ENCODE measurements at regions of chr11 and their contacts with region 1.

Region 1: DNA sequence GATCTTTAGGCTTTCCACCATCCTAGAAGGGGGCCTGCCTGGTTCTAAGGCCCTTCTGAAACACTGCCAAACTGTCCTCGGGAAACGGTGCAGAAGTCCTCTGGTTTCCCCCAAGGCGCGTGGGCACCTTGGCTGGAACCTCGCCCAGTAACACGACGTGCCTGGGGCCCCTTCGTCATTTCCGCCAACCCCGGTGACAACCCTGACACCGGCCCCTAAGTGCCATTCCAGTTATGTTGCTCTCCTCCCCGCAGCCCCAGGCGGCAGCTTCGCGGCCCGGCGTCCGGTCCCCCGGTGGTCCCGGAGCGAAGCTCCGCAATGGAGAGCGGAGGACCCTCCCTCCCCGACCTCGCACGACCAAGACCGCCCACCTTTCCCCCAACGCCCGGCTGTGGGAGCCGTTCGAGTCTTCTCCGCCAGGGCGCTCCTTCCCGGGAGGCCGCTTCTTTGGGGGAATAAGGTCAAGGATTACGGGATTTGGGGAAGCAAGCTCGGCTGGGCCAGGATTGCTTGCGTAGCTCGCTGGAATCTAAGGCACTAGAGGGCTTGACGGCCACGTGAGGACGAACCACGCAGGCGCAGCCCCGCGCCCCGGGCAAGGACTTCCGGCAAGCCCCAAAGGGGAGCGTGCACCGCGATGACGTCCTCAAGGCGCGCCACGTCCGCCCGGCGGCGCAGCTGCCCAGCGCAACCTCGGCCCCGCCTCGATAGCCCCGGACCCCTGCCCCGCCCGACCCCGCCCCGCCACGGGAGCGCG is 626 bp downstream of the RNH1 start:
- DNase-seq: peak; percentile 98
- H3K4me3 Mint-ChIP-seq: peak overlapping the region; percentile 92
- H3K27ac Mint-ChIP-seq: peak overlapping the region; percentile 99
- H3K4me1 Mint-ChIP-seq: peaks cover 22% of the 10 kb centered on the region
- H3K27me3 Mint-ChIP-seq: no peaks in the 10 kb centered on the region

Region 2: DNA sequence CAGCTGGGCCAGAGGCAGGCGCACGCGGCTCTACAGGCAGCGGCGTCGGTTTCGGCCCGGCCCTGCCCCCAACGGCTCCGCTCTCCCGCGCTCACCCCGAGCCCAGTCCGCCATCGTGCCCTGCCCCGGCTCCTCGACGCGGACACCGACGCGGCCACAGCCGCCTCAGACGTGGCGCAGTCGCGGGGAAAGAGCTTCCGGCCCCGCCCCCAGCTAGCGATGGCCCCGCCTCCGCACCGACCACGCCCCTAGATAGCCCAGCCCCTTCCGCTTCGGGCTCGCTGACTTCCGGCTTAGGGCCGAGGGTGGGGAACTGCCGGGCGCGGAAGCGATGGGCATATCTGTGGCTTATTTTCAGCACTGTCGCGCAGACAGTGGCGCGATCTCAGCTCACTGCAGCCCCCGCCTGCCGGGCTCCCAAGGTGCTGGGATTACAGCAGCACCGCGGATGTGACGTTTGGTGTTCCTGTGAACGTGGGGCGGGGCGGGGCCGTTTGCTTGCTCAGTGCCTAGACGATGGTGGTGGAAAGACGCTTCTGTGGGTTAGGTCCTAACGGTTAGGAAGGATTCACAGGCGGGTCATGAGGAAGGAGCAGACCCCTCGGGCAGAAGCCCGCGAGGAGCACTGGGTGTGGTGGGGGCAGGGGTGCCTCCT is 299.1 kb before region 1 on chr11 and contains the starts of genes BET1L and RIC8A:
- CTCF ChIA-PET with region 1: no interaction called
- intact Hi-C with region 1: loop called (anchors 1 kb)
- DNase-seq: peak; percentile 98
- H3K4me3 Mint-ChIP-seq: peak within 1 kb of the TSS; percentile 96
- H3K27ac Mint-ChIP-seq: peak within 1 kb of the TSS; percentile 98
- H3K4me1 Mint-ChIP-seq: peaks cover 69% of the 10 kb centered on the region
- H3K27me3 Mint-ChIP-seq: no peaks in the 10 kb centered on the region
- total RNA-seq, gene BET1L: 50.4 to 51.6 TPM
- total RNA-seq, gene RIC8A: 74.9 to 85.0 TPM

Region 3: GRCh38 chr11:313787-314547 is 192.4 kb before region 1 on chr11 and contains the start of gene IFITM1:
- CTCF ChIA-PET with region 1: no interaction called
- intact Hi-C with region 1: loop called (anchors 2 kb)
- DNase-seq: peak; percentile 77
- H3K4me3 Mint-ChIP-seq: peak within 1 kb of the TSS; percentile 93
- H3K27ac Mint-ChIP-seq: peak within 1 kb of the TSS; percentile 95
- H3K4me1 Mint-ChIP-seq: peaks cover 22% of the 10 kb centered on the region
- H3K27me3 Mint-ChIP-seq: no peaks in the 10 kb centered on the region
- total RNA-seq, gene IFITM1: 359 to 378 TPM

Region 4: GRCh38 chr11:416757-417621 is 89.4 kb before region 1 on chr11:
- CTCF ChIA-PET with region 1: no interaction called
- intact Hi-C with region 1: loop called (anchors 2 kb)
- DNase-seq: peak; percentile 49
- H3K4me3 Mint-ChIP-seq: peak overlapping the region; percentile 86
- H3K27ac Mint-ChIP-seq: no peak overlapping the region
- H3K4me1 Mint-ChIP-seq: peaks cover 30% of the 10 kb centered on the region
- H3K27me3 Mint-ChIP-seq: no peaks in the 10 kb centered on the region

Region 5: GRCh38 chr11:460331-461199 is 45.9 kb before region 1 on chr11:
- CTCF ChIA-PET with region 1: no interaction called
- intact Hi-C with region 1: no loop called
- DNase-seq: no peak
- H3K4me3 Mint-ChIP-seq: no peak overlapping the region
- H3K27ac Mint-ChIP-seq: no peak overlapping the region
- H3K4me1 Mint-ChIP-seq: peaks cover 22% of the 10 kb centered on the region
- H3K27me3 Mint-ChIP-seq: no peaks in the 10 kb centered on the region

Region 6: DNA sequence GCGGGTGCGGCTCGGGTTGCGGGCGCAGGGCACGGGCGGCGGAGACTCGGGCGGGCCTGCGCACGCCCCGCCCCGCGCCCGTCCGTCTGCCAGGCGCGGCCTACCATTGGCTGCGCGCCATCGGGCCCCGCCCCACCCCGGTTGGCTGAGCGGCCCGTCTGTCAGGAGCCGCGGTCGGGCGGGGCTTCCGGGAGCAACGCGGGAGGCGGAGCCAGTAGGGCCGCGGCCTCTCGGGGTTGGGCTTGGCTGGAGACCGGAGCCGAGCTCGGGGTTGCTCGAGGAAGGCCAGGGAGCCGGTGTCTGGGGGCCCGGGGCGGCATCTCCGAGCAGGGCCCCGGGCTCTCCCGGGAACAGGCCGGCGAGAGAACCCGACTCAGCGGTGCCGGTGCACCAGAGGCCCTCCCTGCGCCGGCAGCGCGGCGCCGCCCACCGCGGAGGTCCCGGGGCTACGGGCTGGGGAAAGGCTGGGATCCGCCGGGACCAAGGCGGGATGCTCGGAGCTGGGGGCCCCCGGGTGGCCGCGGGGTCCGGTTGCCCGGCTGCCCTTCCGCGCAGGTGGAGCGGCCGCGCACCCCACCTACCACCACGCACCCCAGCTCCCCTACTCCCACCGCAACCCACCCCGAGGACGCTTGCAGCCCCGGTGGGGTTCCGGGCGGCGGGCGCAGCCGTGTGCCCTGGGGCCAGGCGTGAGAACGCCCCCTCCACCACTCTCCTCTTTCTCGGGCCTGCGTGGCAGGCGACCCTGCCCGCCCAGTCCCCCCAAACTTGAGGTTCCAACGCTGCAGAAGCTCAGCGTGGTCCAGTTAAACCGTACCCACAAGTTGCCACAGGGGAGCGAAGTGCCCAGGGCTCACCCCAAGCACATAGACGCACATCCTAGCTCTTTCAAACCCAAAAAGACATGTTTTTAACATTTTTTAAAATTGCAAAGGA is 29.4 kb after region 1 on chr11 and contains the start of gene HRAS:
- CTCF ChIA-PET with region 1: interaction called, 3 read pairs
- intact Hi-C with region 1: loop called (anchors 1 kb)
- DNase-seq: peak; percentile 94
- H3K4me3 Mint-ChIP-seq: peak within 1 kb of the TSS; percentile 88
- H3K27ac Mint-ChIP-seq: peak within 1 kb of the TSS; percentile 69
- H3K4me1 Mint-ChIP-seq: peaks cover 7% of the 10 kb centered on the region
- H3K27me3 Mint-ChIP-seq: no peaks in the 10 kb centered on the region
- total RNA-seq, gene HRAS: 22.0 to 25.8 TPM

Region 7: DNA sequence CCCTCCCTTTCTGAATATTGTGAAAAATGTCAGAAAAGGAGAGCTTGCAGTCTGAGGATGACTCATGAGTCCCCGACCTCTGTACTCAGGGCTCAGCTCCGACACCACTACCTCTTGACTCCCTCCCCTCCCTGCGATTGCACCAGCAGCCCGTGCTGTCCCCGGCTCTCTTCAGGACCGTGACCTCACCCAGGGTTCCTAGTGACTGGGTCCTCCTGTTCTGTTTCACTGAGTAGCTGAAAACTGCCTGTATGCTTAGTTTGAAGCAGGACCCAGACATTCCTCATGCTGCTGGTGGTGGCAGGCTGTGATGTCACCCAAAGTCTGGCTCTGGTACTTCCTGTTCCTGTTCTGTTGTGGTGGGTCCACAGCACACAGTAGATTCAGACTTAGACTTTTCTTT is 81.6 kb after region 1 on chr11:
- CTCF ChIA-PET with region 1: no interaction called
- intact Hi-C with region 1: loop called (anchors 1 kb)
- DNase-seq: peak; percentile 87
- H3K4me3 Mint-ChIP-seq: peak overlapping the region; percentile 70
- H3K27ac Mint-ChIP-seq: peak overlapping the region; percentile 99
- H3K4me1 Mint-ChIP-seq: peaks cover 25% of the 10 kb centered on the region
- H3K27me3 Mint-ChIP-seq: no peaks in the 10 kb centered on the region

Region 8: DNA sequence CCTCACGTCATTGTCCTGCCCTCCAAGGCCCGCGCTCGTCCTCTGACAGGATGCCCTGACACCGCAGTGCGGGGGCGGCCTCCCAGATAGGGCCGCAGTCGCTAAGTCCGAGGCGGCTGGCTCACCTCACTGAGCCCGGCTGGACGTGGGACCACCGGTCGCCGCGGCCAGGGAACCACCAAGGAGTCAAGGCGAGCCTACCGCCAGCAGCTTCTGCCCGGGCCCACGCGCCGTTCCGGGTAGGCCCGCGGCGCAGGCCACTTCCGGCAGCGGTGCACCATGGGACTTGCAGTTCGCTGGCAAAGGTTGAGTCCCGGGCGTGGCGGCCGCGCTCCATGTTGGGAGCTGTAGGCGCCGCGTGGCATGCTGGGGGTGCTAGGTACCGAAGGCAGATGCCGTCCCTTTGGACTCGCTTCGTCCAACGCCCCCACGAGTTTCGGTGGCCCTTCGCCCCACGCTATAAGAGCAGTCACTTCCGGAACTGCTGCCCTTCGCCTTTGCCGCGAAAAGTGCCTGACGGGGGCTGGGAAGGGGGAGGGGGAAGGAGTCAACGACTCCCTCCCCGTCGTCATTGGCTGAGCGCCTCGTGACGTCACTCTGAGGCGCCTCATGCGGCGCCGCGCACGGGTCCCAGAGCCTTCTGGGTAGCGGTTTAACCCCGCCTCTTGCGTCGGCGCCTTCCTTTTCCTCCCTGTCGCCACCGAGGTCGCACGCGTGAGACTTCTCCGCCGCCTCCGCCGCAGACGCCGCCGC is 303.0 kb after region 1 on chr11 and contains the start of gene RPLP2:
- CTCF ChIA-PET with region 1: no interaction called
- intact Hi-C with region 1: loop called (anchors 1 kb)
- DNase-seq: peak; percentile 99
- H3K4me3 Mint-ChIP-seq: peak within 1 kb of the TSS; percentile 84
- H3K27ac Mint-ChIP-seq: peak within 1 kb of the TSS; percentile 97
- H3K4me1 Mint-ChIP-seq: peaks cover 33% of the 10 kb centered on the region
- H3K27me3 Mint-ChIP-seq: no peaks in the 10 kb centered on the region
- total RNA-seq, gene RPLP2: 3,807 to 3,940 TPM